Activated B cell treated with CpG ODN at 0.5 μM for 24 hours (primary cell): ENCODE measurements at regions of chr10 and their contacts with region 1.

Region 1: DNA sequence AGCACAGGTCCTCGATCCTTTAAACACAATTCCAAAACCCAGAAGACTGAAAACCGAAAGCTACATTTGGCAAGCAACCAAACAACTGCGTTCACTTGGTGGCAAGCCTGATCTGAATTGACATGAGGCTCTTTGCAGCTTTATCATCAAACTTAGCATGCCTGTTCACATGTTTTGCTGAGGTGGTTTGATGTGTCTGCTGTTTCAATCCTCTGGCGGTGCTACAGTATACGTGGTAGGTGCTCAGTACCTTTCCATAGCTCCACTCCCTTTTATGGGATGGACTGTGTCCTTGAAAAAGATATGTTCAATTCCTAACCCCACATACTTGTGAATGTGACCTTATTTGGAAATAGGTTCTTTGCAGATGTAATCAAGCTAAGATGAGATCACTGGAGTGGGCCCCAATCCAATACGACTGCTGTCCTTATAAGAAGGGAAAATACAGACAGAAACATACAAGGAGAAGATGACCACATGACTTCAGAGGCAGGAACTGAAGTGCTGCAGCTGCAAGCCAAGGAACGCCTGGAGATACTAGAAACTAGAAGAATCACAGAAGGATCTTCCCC is 33.4 kb downstream of the CCDC6 start:
- DNase-seq: no peak
- ATAC-seq: no peak
- H3K4me3 Mint-ChIP-seq: peak overlapping the region; percentile 20
- H3K27ac Mint-ChIP-seq: peak overlapping the region; percentile 74
- H3K4me1 Mint-ChIP-seq: peaks cover 90% of the 10 kb centered on the region
- H3K27me3 Mint-ChIP-seq: no peaks in the 10 kb centered on the region
- CTCF ChIP-seq: no peak

Region 2: DNA sequence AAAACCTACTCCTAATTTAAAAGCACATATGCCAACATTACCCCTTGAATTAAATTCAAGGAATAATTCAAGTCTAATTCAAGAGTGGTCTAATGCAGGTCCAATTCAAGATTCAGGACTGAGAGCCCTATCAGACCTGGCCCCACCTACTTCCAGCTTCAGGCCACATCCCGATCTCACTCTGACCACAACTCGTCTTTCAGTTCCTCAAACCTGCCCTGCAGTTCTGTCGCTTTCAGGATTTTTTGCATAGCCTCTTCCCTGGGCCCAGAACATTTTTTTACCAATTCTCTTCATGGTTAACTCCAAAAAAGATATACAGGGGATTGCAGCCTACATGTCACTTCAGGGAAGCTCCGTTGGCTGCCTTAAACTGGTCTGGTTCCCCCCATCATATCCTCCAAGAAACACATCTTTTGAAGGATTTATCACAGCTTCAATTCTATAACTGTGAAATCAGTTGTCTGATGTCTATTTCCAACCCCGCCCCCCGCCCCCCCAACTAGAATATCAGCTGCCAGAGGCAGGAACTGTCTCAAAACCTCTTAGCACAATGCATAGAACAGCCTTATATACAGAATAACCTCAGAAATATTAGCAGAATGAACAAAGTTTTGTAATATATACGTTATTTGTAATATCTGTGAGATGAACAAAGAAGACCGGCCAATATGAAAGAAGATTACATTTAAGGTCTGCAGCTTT is 12.6 kb after region 1 on chr10:
- CTCF ChIA-PET with region 1: interaction called, 3 read pairs
- POLR2A ChIA-PET with region 1: interaction called, 10 read pairs
- intact Hi-C with region 1: loop called (anchors 1 kb)
- DNase-seq: peak; percentile 69
- ATAC-seq: peak; percentile 89
- H3K4me3 Mint-ChIP-seq: peak overlapping the region; percentile 45
- H3K27ac Mint-ChIP-seq: peak overlapping the region; percentile 68
- H3K4me1 Mint-ChIP-seq: peaks cover 87% of the 10 kb centered on the region
- H3K27me3 Mint-ChIP-seq: no peaks in the 10 kb centered on the region
- CTCF ChIP-seq: no peak